ENCODE measurements at regions of chr11 and their contacts with region 1.

Region 1: DNA sequence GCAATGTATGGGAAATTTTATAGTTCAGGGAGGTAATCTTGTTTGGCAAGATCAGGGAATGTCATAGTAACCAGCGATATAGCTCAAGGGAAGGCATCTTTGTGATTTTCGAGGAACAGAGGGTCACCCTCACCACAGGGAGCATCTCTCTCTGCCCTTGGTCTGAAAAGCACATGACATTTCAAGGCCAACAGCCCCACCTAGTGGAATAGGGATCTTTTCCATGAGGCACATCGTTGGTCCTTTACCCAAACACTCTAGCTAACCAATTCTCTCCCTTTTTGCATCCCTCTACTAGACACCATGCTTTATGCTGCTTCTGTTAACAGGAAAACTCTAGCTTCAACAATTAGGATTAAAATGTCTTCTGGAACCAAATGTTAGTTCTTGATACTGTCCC is 179.0 kb downstream of the GRM5 start:
- DNase-seq: peak in 4 of 9 donors; percentile 11 to 34 (median 19)
- ATAC-seq: no peak
- H3K4me3 ChIP-seq: no peak overlapping the region
- H3K4me3 Mint-ChIP-seq: no peak overlapping the region
- H3K27ac ChIP-seq: no peak overlapping the region
- H3K27ac Mint-ChIP-seq: peak overlapping the region in 3 of 9 donors; percentile 9 to 19 (median 14)
- H3K4me1 ChIP-seq: no peaks in the 10 kb centered on the region
- H3K4me1 Mint-ChIP-seq: peaks cover 0 to 1% (median 0%) of the 10 kb centered on the region in 7 donors
- H3K27me3 ChIP-seq: no peaks in the 10 kb centered on the region
- H3K27me3 Mint-ChIP-seq: no peaks in the 10 kb centered on the region

Region 2: DNA sequence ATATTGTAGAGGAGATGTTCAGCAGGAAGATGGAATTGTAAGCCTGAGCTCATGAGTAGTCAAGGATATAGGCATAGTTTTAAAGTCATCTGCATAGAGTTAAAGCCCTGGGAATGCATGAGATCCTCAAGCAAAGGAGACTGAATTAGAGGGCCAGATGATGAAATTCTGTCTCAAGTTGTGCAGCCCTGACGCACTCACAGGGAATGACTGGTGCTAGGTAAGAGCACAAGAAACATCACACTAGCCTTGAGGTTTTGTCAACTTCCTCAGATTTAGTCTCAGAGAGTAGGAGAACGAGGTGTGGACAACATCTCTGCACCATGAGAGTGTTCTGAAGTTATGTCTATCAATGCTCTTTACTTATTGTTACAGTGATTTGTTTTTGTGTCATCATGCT is 717.3 kb before region 1 on chr11:
- CTCF ChIA-PET with region 1: no interaction called
- POLR2A ChIA-PET with region 1: no interaction called
- intact Hi-C with region 1: loop called in 1 of 2 experiments (anchors 10 kb)
- DNase-seq: no peak
- ATAC-seq: no peak
- H3K4me3 ChIP-seq: no peak overlapping the region
- H3K4me3 Mint-ChIP-seq: no peak overlapping the region
- H3K27ac ChIP-seq: no peak overlapping the region
- H3K27ac Mint-ChIP-seq: no peak overlapping the region
- H3K4me1 ChIP-seq: no peaks in the 10 kb centered on the region
- H3K4me1 Mint-ChIP-seq: peaks cover 0 to 8% (median 4%) of the 10 kb centered on the region in 7 donors
- H3K27me3 ChIP-seq: no peaks in the 10 kb centered on the region
- H3K27me3 Mint-ChIP-seq: peaks cover 0 to 9% (median 4%) of the 10 kb centered on the region in 5 donors